ENCODE measurements at regions of chr2 and their contacts with region 1.

Region 1: GRCh38 chr2:9423100-9423921 is at the starts of genes CPSF3 and ITGB1BP1:
- DNase-seq: peak; percentile 87 to 98 (median 94)
- ATAC-seq: peak; percentile 84
- H3K4me3 ChIP-seq: peak within 1 kb of the TSS; percentile 99
- H3K4me3 Mint-ChIP-seq: peak within 1 kb of the TSS; percentile 94
- H3K27ac ChIP-seq: peak within 1 kb of the TSS; percentile 73 to 84
- H3K27ac Mint-ChIP-seq: no peak within 1 kb of the TSS
- H3K4me1 ChIP-seq: peaks cover 39% of the 10 kb centered on the region
- H3K4me1 Mint-ChIP-seq: peaks cover 35% of the 10 kb centered on the region
- H3K27me3 ChIP-seq: no peaks in the 10 kb centered on the region
- H3K27me3 Mint-ChIP-seq: no peaks in the 10 kb centered on the region
- CTCF ChIP-seq: no peak
- total RNA-seq, gene CPSF3: 13.2 to 13.8 TPM
- total RNA-seq, gene ITGB1BP1: 24.4 to 25.0 TPM

Region 2: GRCh38 chr2:8836971-8837794 is 586.1 kb before region 1 on chr2 and contains the start of gene KIDINS220:
- CTCF ChIA-PET with region 1: no interaction called
- POLR2A ChIA-PET with region 1: no interaction called
- intact Hi-C with region 1: loop called (anchors 5 kb)
- DNase-seq: peak; percentile 79 to 93 (median 84)
- ATAC-seq: peak; percentile 96
- H3K4me3 ChIP-seq: peak within 1 kb of the TSS; percentile 89
- H3K4me3 Mint-ChIP-seq: peak within 1 kb of the TSS; percentile 100
- H3K27ac ChIP-seq: peak within 1 kb of the TSS in 1 of 2 donors; percentile 48
- H3K27ac Mint-ChIP-seq: peak within 1 kb of the TSS; percentile 84
- H3K4me1 ChIP-seq: peaks cover 40% of the 10 kb centered on the region
- H3K4me1 Mint-ChIP-seq: peaks cover 49% of the 10 kb centered on the region
- H3K27me3 ChIP-seq: no peaks in the 10 kb centered on the region
- H3K27me3 Mint-ChIP-seq: no peaks in the 10 kb centered on the region
- CTCF ChIP-seq: no peak
- total RNA-seq, gene KIDINS220: 29.3 to 31.4 TPM

Region 3: DNA sequence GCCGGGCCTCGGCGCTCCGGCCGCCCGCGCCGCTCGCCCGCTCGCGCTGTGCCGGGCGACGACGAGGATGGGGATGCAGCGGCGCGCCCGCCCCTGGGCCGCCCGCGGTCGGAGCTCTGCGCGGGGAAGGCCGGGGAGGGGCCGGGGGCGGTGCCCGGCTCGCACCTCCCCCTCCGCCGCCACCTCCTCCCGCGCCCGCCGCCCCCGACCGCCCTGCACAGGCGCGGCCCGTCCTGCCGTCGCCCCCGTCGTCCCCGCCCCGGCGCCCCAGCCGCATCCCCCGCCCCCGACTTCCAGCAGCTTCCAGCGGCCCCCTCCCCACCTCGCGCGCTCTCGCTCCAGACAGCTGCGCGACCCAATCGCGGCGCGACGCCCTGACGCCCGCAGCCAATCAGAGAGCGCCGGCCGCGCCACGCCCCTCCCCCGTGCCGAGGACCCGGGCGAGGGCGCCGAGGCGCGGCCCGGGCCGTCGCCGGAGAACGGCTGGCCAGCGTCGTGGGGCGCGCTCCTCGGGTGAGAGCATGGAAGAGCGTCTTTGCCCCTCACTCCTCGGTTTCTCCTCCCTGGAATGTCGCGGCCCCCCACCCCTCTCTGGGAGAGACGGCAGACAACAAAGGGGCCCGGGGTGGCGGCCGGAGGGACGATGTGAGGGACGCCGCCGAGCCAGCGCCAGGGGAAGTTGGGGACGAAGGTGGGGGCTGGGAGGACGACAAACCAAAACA is 419.5 kb before region 1 on chr2 and contains the start of gene MBOAT2:
- CTCF ChIA-PET with region 1: no interaction called
- POLR2A ChIA-PET with region 1: no interaction called
- intact Hi-C with region 1: loop called in 1 of 2 experiments (anchors 5 kb)
- DNase-seq: peak; percentile 56 to 91 (median 72)
- ATAC-seq: peak; percentile 85
- H3K4me3 ChIP-seq: peak within 1 kb of the TSS; percentile 74
- H3K4me3 Mint-ChIP-seq: peak within 1 kb of the TSS; percentile 91
- H3K27ac ChIP-seq: peak within 1 kb of the TSS in 1 of 2 donors; percentile 35
- H3K27ac Mint-ChIP-seq: peak within 1 kb of the TSS; percentile 82
- H3K4me1 ChIP-seq: peaks cover 15% of the 10 kb centered on the region
- H3K4me1 Mint-ChIP-seq: peaks cover 26% of the 10 kb centered on the region
- H3K27me3 ChIP-seq: no peaks in the 10 kb centered on the region
- H3K27me3 Mint-ChIP-seq: no peaks in the 10 kb centered on the region
- CTCF ChIP-seq: no peak
- total RNA-seq, gene MBOAT2: 1.9 to 2.0 TPM

Region 4: GRCh38 chr2:9474361-9474967 is 51.2 kb after region 1 on chr2 and contains the start of gene IAH1:
- CTCF ChIA-PET with region 1: no interaction called
- POLR2A ChIA-PET with region 1: interaction called, 50 read pairs
- intact Hi-C with region 1: loop called (anchors 1 to 5 kb)
- DNase-seq: peak; percentile 54 to 90 (median 75)
- ATAC-seq: peak; percentile 81
- H3K4me3 ChIP-seq: peak within 1 kb of the TSS; percentile 82
- H3K4me3 Mint-ChIP-seq: peak within 1 kb of the TSS; percentile 88
- H3K27ac ChIP-seq: peak within 1 kb of the TSS; percentile 90
- H3K27ac Mint-ChIP-seq: peak within 1 kb of the TSS; percentile 92
- H3K4me1 ChIP-seq: peaks cover 37% of the 10 kb centered on the region
- H3K4me1 Mint-ChIP-seq: peaks cover 59% of the 10 kb centered on the region
- H3K27me3 ChIP-seq: no peaks in the 10 kb centered on the region
- H3K27me3 Mint-ChIP-seq: no peaks in the 10 kb centered on the region
- CTCF ChIP-seq: no peak
- total RNA-seq, gene IAH1: 54.8 to 57.3 TPM

Region 5: GRCh38 chr2:9555297-9556141 is 132.2 kb after region 1 on chr2 and contains the start of gene ADAM17:
- CTCF ChIA-PET with region 1: no interaction called
- POLR2A ChIA-PET with region 1: interaction called, 13 read pairs
- intact Hi-C with region 1: loop called in 1 of 2 experiments (anchors 2 kb)
- DNase-seq: peak; percentile 60 to 93 (median 80)
- ATAC-seq: peak; percentile 86
- H3K4me3 ChIP-seq: peak within 1 kb of the TSS; percentile 95
- H3K4me3 Mint-ChIP-seq: peak within 1 kb of the TSS; percentile 95
- H3K27ac ChIP-seq: peak within 1 kb of the TSS; percentile 93 to 97
- H3K27ac Mint-ChIP-seq: peak within 1 kb of the TSS; percentile 86
- H3K4me1 ChIP-seq: peaks cover 29% of the 10 kb centered on the region
- H3K4me1 Mint-ChIP-seq: peaks cover 58% of the 10 kb centered on the region
- H3K27me3 ChIP-seq: no peaks in the 10 kb centered on the region
- H3K27me3 Mint-ChIP-seq: no peaks in the 10 kb centered on the region
- CTCF ChIP-seq: peak; percentile 15
- total RNA-seq, gene ADAM17: 21.4 to 21.6 TPM